RWPE1 (cell line): ENCODE measurements at regions of chr5 and their contacts with region 1.

Region 1: DNA sequence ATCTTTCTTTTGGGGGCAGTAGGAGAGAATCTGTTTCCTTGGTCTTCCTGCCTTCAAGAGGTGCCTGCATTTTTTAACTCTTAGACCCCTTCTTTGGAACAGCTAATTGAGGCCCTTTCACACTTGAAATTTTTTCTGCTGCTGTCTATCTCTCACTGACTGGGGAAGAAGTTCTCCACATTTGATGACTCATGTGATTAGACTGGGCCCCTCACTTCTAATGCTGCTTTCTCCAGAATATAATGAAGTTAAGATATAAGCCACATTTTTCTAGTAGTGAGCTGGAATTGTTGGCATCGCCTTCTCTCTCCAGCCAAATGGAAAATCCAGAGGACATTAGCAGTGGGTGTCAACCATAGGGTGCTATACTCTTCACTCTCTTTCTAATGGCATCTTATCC is 12.4 kb downstream of the ZNF474 start:
- DNase-seq: no peak
- H3K27ac ChIP-seq: no peak overlapping the region
- CTCF ChIP-seq: no peak

Region 2: GRCh38 chr5:122053181-122054109 is 88.3 kb before region 1 on chr5:
- CTCF ChIA-PET with region 1: no interaction called
- POLR2A ChIA-PET with region 1: no interaction called
- DNase-seq: no peak
- H3K27ac ChIP-seq: peak overlapping the region; percentile 8; the same call in 1 of the 2 replicates
- CTCF ChIP-seq: no peak

Region 3: DNA sequence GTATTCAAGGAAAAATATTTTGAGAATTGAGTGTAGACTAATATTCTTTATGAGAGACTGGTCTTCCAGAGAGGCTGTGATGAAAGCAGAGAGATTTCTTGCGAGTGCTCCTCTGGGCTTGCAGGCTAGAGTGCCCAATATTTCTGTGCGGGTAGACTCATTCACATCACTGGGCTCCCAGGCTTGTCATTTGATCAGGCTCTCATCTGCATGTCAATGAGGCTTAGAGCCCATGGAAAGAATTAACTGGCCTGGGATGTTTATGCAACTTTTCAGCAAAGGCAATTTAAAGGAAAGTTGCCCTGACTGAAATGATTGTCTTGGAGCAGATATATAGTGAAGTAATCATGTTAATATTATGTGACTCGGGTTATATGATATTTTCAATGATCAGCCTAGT is 212.5 kb after region 1 on chr5:
- CTCF ChIA-PET with region 1: no interaction called
- POLR2A ChIA-PET with region 1: no interaction called
- DNase-seq: no peak
- H3K27ac ChIP-seq: no peak overlapping the region
- CTCF ChIP-seq: no peak

Region 4: DNA sequence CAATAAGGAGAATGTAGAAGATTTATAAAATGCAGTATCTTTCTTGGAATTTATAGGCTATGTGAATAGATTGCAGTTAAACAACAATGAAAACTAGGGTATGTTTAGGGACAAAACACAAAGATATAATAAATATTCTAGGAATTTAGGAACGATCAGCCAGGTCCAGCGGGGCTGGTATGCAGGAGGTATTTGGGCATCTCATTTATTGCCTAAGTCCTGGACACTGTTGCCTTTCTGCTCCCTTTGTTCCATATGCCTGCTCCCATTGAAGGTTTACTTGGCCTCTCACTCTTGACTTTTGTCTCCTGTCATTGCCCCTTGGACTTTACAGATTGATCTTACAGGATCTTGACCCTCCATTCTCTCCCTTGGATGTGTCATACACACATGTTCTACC is 759.6 kb after region 1 on chr5:
- CTCF ChIA-PET with region 1: interaction called, 10 read pairs
- POLR2A ChIA-PET with region 1: no interaction called
- DNase-seq: no peak
- H3K27ac ChIP-seq: no peak overlapping the region
- CTCF ChIP-seq: no peak